Right cardiac atrium (tissue), 5 donors: ENCODE measurements at regions of chr11 and their contacts with region 1.

Region 1: GRCh38 chr11:18105802-18106574 is at the start of gene SAAL1:
- DNase-seq: peak; percentile 89 to 95 (median 94)
- ATAC-seq: peak; percentile 98
- H3K4me3 ChIP-seq: peak within 1 kb of the TSS; percentile 85
- H3K27ac ChIP-seq: no peak within 1 kb of the TSS
- H3K4me1 ChIP-seq: peaks cover 3% of the 10 kb centered on the region
- H3K27me3 ChIP-seq: no peaks in the 10 kb centered on the region
- total RNA-seq, gene SAAL1: 5.9 to 10.4 (median 9.1) TPM

Region 2: DNA sequence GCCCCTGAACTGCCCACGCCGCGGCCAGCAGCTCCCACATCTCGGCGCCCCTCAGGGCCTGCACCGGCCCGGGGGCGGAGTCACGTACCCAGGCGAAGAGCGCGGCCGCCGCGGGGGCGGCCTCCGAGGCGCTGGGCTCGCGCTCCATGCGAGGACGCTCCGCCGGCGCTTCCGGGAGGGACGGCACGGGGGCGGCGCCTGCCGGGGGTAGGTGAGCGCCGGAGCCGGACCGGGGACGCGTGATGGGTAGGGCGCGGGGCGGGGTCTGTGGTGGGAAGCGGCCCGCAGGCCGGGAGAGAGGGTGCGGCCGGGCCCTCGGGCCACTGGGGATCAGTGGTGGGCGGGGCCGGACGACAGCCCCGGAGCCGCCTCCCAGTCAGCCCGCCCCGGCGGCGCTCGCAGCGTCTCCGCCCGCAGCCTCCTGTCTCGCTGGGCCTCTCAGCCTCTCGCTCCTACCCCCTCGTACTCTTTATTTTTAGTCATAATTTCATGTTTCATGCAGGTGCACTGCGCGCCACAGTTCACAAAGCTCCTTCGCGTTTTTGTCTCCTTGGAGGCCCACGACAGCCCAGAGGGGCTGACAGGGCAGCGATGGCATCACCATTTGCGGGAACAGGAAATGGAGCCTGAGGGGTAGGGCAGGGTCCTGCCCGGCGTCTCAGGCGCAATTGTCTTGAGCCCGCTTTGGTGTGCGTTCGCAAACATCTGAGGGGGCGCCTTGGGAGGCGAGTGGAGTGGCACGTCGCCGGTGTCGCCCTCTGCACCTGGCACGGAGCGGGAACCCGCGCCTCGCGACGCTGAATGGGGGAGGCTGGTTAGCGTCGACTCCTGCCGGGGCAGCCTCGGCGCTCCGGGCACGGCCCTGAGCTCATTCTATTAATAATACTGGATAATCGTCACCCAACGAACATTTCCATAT is 92.9 kb before region 1 on chr11 and contains the start of gene SERGEF:
- intact Hi-C with region 1: loop called in 1 of 4 experiments (anchors 10 kb)
- DNase-seq: peak; percentile 95 to 98 (median 97)
- ATAC-seq: peak; percentile 99
- H3K4me3 ChIP-seq: peak within 1 kb of the TSS; percentile 81
- H3K27ac ChIP-seq: peak within 1 kb of the TSS; percentile 80
- H3K4me1 ChIP-seq: peaks cover 2% of the 10 kb centered on the region
- H3K27me3 ChIP-seq: no peaks in the 10 kb centered on the region
- total RNA-seq, gene SERGEF: 30.8 to 41.0 (median 31.3) TPM